Endothelial cell of umbilical vein (primary cell): ENCODE measurements at regions of chr10 and their contacts with region 1.

Region 1: DNA sequence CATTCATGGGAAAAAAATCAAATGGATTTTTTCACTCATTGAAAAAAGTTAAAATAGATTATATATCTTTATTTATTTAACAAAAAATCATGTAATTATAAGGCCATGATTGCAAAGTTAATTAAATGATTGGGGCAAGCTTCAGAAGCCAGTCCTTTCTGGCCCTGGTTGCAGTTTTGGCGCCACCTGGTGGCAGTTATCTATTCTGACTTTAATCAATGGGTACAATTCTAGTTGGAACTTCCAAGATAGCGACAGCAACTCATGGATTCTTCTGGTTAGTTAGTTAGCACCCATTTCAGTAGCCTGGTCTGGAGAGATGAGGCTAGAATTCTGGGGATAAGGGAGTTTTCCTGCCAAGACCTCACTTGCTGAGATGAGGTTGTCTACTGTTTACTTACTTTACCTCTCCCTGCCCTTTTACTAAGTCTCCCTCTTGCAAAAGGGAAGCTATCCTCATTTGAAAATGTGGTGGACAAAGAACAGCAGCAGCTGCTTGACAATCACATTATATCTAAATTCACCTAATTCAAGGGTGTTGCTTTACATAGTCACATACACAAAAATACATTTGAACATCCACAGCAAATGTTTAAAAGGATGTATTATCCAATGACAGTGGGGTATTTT is 42.3 kb downstream of the NOC3L start:
- DNase-seq: peak; percentile 75
- H3K4me3 ChIP-seq: no peak overlapping the region
- H3K27ac ChIP-seq: no peak overlapping the region
- H3K4me1 ChIP-seq: no peaks in the 10 kb centered on the region
- H3K27me3 ChIP-seq: no peaks in the 10 kb centered on the region
- CTCF ChIP-seq: peak; percentile 61 to 76
- POLR2A ChIP-seq: no peak

Region 2: GRCh38 chr10:93702211-93703001 is 618.0 kb before region 1 on chr10 and contains the start of gene FRA10AC1:
- CTCF ChIA-PET with region 1: interaction called, 11 read pairs
- POLR2A ChIA-PET with region 1: no interaction called
- dilution Hi-C with region 1: no loop called
- intact Hi-C with region 1: no loop called
- DNase-seq: peak; percentile 91
- H3K4me3 ChIP-seq: peak within 1 kb of the TSS; percentile 68 to 94 (median 88)
- H3K27ac ChIP-seq: peak within 1 kb of the TSS; percentile 74
- H3K4me1 ChIP-seq: peaks cover 9% of the 10 kb centered on the region
- H3K27me3 ChIP-seq: peaks cover 0 to 4% of the 10 kb centered on the region in 2 experiments
- CTCF ChIP-seq: peak; percentile 12 to 21
- POLR2A ChIP-seq: no peak
- total RNA-seq, gene FRA10AC1: 17.2 and 24.4 TPM in 2 replicates

Region 3: DNA sequence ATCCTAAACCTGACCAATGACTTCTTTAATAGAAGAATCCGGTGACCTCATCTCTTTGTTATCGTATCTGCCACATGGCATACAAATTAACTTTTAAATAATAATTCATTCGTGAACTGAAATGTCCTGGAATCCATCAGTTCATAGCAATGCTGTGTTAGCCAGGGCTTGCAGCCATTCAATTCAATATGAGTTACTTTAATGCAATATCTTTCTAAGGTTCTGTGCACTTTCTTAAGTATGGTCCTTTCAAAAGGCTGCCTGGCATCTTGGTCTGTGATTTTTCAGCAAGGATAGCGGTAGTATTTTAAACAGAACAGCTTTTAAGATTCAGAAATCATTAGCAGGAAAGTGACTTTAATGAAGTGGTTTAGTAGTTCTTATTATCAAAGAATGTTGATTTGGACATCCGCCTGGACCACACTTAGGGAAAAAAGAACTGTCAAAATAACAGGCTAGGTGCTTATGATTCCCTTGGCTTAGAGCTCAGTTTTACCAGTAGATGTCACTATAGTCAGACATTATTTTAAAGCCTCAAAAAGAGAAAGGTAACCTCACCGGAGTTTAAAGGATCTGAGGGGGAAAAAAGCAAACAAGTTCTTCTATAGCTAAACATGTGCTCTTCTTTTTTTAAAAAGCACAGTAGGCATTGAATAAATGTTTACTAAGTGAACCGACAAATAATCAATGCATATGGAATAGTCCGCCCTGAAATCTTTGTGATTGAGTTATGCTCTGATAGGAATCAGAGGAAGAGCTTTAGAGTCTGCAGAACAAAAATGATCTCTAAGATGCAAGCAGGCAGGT is 403.9 kb before region 1 on chr10:
- CTCF ChIA-PET with region 1: interaction called, 157 read pairs
- POLR2A ChIA-PET with region 1: no interaction called
- dilution Hi-C with region 1: no loop called
- intact Hi-C with region 1: loop called (anchors 1 kb)
- DNase-seq: peak; percentile 31
- H3K4me3 ChIP-seq: no peak overlapping the region
- H3K27ac ChIP-seq: no peak overlapping the region
- H3K4me1 ChIP-seq: peaks cover 7% of the 10 kb centered on the region
- H3K27me3 ChIP-seq: no peaks in the 10 kb centered on the region
- CTCF ChIP-seq: peak in 1 of 2 donors; percentile 33
- POLR2A ChIP-seq: no peak

Region 4: GRCh38 chr10:93993782-93994437 is 326.5 kb before region 1 on chr10 and contains the start of gene PLCE1:
- CTCF ChIA-PET with region 1: no interaction called
- POLR2A ChIA-PET with region 1: no interaction called
- dilution Hi-C with region 1: no loop called
- intact Hi-C with region 1: no loop called
- DNase-seq: no peak
- H3K4me3 ChIP-seq: peak within 1 kb of the TSS in 2 of 3 experiments; percentile 7 to 30
- H3K27ac ChIP-seq: no peak within 1 kb of the TSS
- H3K4me1 ChIP-seq: peaks cover 4% of the 10 kb centered on the region
- H3K27me3 ChIP-seq: peaks cover 21 to 37% of the 10 kb centered on the region in 2 experiments
- CTCF ChIP-seq: no peak
- POLR2A ChIP-seq: no peak
- total RNA-seq, gene PLCE1: 0.04 and 0.05 TPM in 2 replicates

Region 5: DNA sequence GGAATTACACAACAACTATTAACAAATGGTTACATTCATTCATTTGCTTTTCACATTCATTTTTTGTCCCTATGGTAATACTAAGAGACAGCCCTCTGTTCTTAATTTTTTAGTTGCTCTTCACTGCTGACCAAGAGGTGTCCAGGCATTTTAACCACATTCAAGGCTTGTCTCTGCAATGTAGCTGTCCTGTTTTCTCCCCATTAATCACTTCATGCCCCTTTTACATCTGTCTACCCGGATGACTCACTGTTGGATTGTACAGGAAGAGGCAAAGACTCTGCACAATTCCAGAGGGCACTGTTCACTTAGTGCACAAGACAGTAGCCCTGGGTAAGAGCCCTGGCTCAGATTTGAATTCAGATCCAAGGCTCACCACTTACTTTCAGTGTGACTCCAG is 126.1 kb before region 1 on chr10:
- CTCF ChIA-PET with region 1: no interaction called
- POLR2A ChIA-PET with region 1: no interaction called
- dilution Hi-C with region 1: no loop called
- intact Hi-C with region 1: no loop called
- DNase-seq: no peak
- H3K4me3 ChIP-seq: no peak overlapping the region
- H3K27ac ChIP-seq: no peak overlapping the region
- H3K4me1 ChIP-seq: no peaks in the 10 kb centered on the region
- H3K27me3 ChIP-seq: peaks cover 0 to 2% of the 10 kb centered on the region in 2 experiments
- CTCF ChIP-seq: no peak
- POLR2A ChIP-seq: no peak

Region 6: GRCh38 chr10:94287336-94287735 is 33.1 kb before region 1 on chr10:
- CTCF ChIA-PET with region 1: interaction called, 26 read pairs
- POLR2A ChIA-PET with region 1: no interaction called
- dilution Hi-C with region 1: no loop called
- intact Hi-C with region 1: no loop called
- DNase-seq: peak; percentile 88
- H3K4me3 ChIP-seq: no peak overlapping the region
- H3K27ac ChIP-seq: no peak overlapping the region
- H3K4me1 ChIP-seq: no peaks in the 10 kb centered on the region
- H3K27me3 ChIP-seq: peaks cover 0 to 2% of the 10 kb centered on the region in 2 experiments
- CTCF ChIP-seq: no peak
- POLR2A ChIP-seq: no peak

Region 7: DNA sequence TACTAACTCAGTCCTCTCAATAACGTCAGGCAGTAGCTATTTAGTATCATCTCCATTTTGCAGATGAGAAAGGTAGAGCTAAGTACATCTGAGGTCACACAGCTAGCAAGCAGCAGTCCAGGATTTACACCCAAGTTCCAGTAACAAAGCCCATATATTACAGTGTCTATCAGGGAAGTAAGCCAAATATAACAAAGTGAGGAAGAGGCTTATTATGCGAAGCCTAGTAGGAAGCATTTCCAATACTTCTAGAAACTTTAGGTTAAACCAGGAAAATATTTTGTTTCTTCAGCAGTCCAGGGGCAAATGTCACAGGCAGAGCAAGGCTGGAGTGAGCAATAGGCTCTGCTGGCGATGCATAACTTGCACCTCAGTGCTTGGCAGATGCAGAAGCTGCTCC is 11.5 kb before region 1 on chr10:
- CTCF ChIA-PET with region 1: interaction called, 66 read pairs
- POLR2A ChIA-PET with region 1: no interaction called
- dilution Hi-C with region 1: no loop called
- intact Hi-C with region 1: no loop called
- DNase-seq: peak; percentile 87
- H3K4me3 ChIP-seq: no peak overlapping the region
- H3K27ac ChIP-seq: no peak overlapping the region
- H3K4me1 ChIP-seq: peaks cover 12% of the 10 kb centered on the region
- H3K27me3 ChIP-seq: peaks cover 0 to 2% of the 10 kb centered on the region in 2 experiments
- CTCF ChIP-seq: no peak
- POLR2A ChIP-seq: no peak

Region 8: GRCh38 chr10:94344522-94345122 is 24.2 kb after region 1 on chr10:
- CTCF ChIA-PET with region 1: interaction called, 18 read pairs
- POLR2A ChIA-PET with region 1: no interaction called
- dilution Hi-C with region 1: no loop called
- intact Hi-C with region 1: no loop called
- DNase-seq: no peak
- H3K4me3 ChIP-seq: no peak overlapping the region
- H3K27ac ChIP-seq: no peak overlapping the region
- H3K4me1 ChIP-seq: no peaks in the 10 kb centered on the region
- H3K27me3 ChIP-seq: no peaks in the 10 kb centered on the region
- CTCF ChIP-seq: no peak
- POLR2A ChIP-seq: no peak